ENCODE measurements at regions of chr12 and their contacts with region 1.

Region 1: GRCh38 chr12:69070319-69071090 is 137.5 kb upstream of the CPM start:
- DNase-seq: peak; percentile 87
- H3K4me3 Mint-ChIP-seq: no peak overlapping the region
- H3K27ac Mint-ChIP-seq: no peak overlapping the region
- H3K4me1 Mint-ChIP-seq: peaks cover 38% of the 10 kb centered on the region
- H3K27me3 Mint-ChIP-seq: peaks cover 8% of the 10 kb centered on the region

Region 2: GRCh38 chr12:68358532-68359485 is 711.7 kb before region 1 on chr12:
- CTCF ChIA-PET with region 1: interaction called, 3 read pairs
- intact Hi-C with region 1: loop called (anchors 5 kb)
- DNase-seq: peak; percentile 84
- H3K4me3 Mint-ChIP-seq: no peak overlapping the region
- H3K27ac Mint-ChIP-seq: peak overlapping the region; percentile 10
- H3K4me1 Mint-ChIP-seq: peaks cover 25% of the 10 kb centered on the region
- H3K27me3 Mint-ChIP-seq: no peaks in the 10 kb centered on the region

Region 3: GRCh38 chr12:68831272-68831671 is 239.2 kb before region 1 on chr12:
- CTCF ChIA-PET with region 1: interaction called, 5 read pairs
- intact Hi-C with region 1: loop called (anchors 1 kb)
- DNase-seq: no peak
- H3K4me3 Mint-ChIP-seq: no peak overlapping the region
- H3K27ac Mint-ChIP-seq: no peak overlapping the region
- H3K4me1 Mint-ChIP-seq: peaks cover 25% of the 10 kb centered on the region
- H3K27me3 Mint-ChIP-seq: no peaks in the 10 kb centered on the region

Region 4: DNA sequence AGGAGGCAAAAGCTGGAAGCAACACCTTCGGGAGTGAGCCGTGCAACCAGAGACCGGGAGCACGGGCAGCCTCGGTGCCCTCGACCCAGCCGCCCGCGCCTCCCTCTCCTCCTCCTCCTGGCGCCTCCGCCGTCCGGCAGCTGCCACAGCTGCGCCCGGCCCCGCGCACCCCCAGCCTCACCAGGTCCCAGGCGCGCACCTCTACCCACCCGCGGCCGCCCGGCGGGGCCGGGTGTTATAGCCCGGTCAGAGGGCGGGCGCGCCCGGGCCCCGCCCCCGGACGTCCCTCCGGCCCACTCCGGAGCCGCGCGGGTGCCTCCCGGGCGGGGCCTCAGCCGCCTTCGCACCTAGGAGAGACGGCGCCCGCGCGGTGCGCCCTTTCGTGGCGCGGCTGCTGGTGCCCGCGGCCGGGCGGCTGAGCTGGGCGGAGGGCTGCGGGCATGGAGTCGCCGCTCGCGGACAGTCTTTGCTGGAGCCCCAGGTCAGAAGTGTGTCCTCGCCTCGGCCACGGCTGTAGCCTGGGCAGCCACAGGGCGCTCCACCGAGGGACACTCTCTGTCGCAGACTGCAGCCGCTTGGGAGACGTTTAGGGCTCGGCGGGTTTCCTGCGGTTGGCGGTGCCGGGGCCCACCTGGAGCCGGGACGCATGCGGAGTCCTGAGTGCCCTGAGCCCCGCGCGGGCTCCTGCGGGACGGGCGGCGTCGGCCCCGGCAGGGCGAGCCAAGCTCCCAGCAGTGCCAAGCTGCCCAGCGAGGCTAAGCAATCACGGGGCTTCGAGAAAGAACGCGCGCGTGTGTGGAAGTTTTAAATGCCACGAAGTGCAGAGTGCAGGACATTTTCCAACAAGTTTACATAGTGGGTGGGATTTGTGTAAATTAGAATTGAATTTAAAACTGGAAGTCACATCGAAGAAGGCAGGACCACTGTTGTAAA is 137.3 kb before region 1 on chr12 and contains the start of gene CPM:
- CTCF ChIA-PET with region 1: no interaction called
- intact Hi-C with region 1: loop called (anchors 1 kb)
- DNase-seq: peak; percentile 76
- H3K4me3 Mint-ChIP-seq: peak within 1 kb of the TSS; percentile 82
- H3K27ac Mint-ChIP-seq: peak within 1 kb of the TSS; percentile 58
- H3K4me1 Mint-ChIP-seq: peaks cover 21% of the 10 kb centered on the region
- H3K27me3 Mint-ChIP-seq: peaks cover 22% of the 10 kb centered on the region
- total RNA-seq, gene CPM: 50.5 to 55.1 TPM

Region 5: GRCh38 chr12:69007101-69007854 is 63.2 kb before region 1 on chr12:
- CTCF ChIA-PET with region 1: interaction called, 6 read pairs
- intact Hi-C with region 1: loop called (anchors 1 kb)
- DNase-seq: peak; percentile 51
- H3K4me3 Mint-ChIP-seq: peak overlapping the region; percentile 56
- H3K27ac Mint-ChIP-seq: peak overlapping the region; percentile 83
- H3K4me1 Mint-ChIP-seq: peaks cover 17% of the 10 kb centered on the region
- H3K27me3 Mint-ChIP-seq: peaks cover 28% of the 10 kb centered on the region

Region 6: GRCh38 chr12:69254046-69254445 is 183.5 kb after region 1 on chr12:
- CTCF ChIA-PET with region 1: no interaction called
- intact Hi-C with region 1: loop called (anchors 2 kb)
- DNase-seq: no peak
- H3K4me3 Mint-ChIP-seq: no peak overlapping the region
- H3K27ac Mint-ChIP-seq: peak overlapping the region; percentile 71
- H3K4me1 Mint-ChIP-seq: peaks cover 39% of the 10 kb centered on the region
- H3K27me3 Mint-ChIP-seq: no peaks in the 10 kb centered on the region

Region 7: DNA sequence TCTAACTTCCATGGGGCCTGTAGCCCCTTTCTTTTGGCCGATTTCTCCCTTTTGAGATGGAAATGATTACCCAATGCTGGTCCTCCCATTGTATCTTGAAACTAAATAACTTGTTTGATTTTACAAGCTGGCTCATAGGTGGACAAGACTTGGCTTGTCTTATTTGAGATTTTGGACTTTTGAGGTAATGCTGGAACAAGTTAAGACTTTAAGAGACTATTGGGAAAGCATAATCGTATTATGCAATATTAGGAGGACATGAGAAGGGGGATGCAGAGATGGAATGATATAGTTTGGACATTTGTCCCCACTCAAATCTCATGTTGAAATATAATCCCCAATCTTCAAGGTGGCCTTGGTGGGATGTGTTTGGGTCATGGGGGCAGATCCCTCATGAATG is 228.4 kb after region 1 on chr12:
- CTCF ChIA-PET with region 1: no interaction called
- intact Hi-C with region 1: no loop called
- DNase-seq: no peak
- H3K4me3 Mint-ChIP-seq: no peak overlapping the region
- H3K27ac Mint-ChIP-seq: no peak overlapping the region
- H3K4me1 Mint-ChIP-seq: peaks cover 12% of the 10 kb centered on the region
- H3K27me3 Mint-ChIP-seq: peaks cover 6% of the 10 kb centered on the region